ENCODE measurements at regions of chr15 and their contacts with region 1.

Region 1: GRCh38 chr15:50354838-50355618 is at the start of gene GABPB1:
- DNase-seq: peak; percentile 67 to 94 (median 88)

Region 2: GRCh38 chr15:50066192-50066591 is 288.8 kb before region 1 on chr15:
- intact Hi-C with region 1: no loop called
- DNase-seq: no peak

Region 3: GRCh38 chr15:50424066-50424890 is 69.2 kb after region 1 on chr15 and contains the start of gene USP8:
- intact Hi-C with region 1: loop called (anchors 2 kb)
- DNase-seq: peak; percentile 94 to 98 (median 96)